PC-3 (cell line): ENCODE measurements at regions of chr3 and their contacts with region 1.

Region 1: GRCh38 chr3:153130312-153130990 is 31.6 kb upstream of the RAP2B start:
- DNase-seq: peak; percentile 77
- ATAC-seq: peak; percentile 96
- H3K4me3 ChIP-seq: peak overlapping the region; percentile 13; the same call in 1 of the 2 replicates
- H3K27ac ChIP-seq: peak overlapping the region; percentile 68
- H3K4me1 ChIP-seq: peaks cover 18% of the 10 kb centered on the region
- H3K27me3 ChIP-seq: no peaks in the 10 kb centered on the region
- CTCF ChIP-seq: no peak

Region 2: GRCh38 chr3:153087595-153088566 is 42.6 kb before region 1 on chr3:
- CTCF ChIA-PET with region 1: no interaction called
- POLR2A ChIA-PET with region 1: no interaction called
- intact Hi-C with region 1: loop called (anchors 5 kb)
- DNase-seq: peak; percentile 75
- ATAC-seq: peak; percentile 83
- H3K4me3 ChIP-seq: no peak overlapping the region
- H3K27ac ChIP-seq: peak overlapping the region; percentile 45
- H3K4me1 ChIP-seq: peaks cover 25% of the 10 kb centered on the region
- H3K27me3 ChIP-seq: no peaks in the 10 kb centered on the region
- CTCF ChIP-seq: no peak